Activated CD4-positive, alpha-beta T cell treated with anti-CD3 and anti-CD28 coated beads for 36 hours (primary cell): ENCODE measurements at regions of chr4 and their contacts with region 1.

Region 1: DNA sequence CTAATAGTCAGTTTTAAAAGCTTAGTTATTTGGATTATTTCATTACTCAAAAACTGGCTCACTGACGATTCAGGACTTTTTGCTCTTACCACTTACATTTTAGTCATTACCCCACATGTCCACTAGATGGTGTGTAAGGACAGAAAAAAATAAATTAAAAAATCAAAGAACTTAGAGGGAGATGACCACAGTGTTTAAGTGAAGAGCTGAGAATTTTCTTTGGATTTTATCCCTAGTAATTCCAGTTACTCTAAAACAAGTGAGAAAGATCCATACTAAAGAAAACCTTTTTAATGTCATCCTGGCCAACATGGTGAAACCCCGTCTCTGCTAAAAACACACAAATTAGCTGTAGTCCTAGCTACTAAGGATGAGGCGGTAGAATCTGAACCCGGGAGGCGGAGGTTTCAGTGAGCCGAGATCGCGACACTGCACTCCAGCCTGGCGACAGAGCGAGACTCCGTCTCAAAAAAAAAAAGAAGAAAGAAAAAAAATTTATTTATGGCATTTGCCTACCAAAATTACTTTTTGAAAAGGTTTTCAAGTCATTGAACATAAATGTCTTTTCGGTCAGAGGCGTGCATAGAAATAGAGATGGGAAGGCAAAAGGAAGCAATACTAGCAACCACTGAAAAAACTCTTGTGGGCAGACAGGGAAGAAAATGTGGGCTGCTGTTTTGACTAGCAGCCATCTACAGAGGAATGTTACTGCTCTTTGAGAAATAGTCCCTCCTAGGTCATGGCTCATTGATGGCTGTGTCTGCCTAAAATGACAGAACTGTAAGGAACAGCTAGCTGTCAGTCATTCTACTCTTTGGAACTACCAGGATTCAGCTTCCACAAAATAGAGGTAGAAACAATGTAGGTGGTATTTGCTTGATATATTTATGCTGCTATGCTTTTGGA is 26.6 kb upstream of the TMPRSS11B start:
- DNase-seq: peak; percentile 22
- ATAC-seq: peak; percentile 69
- H3K4me3 Mint-ChIP-seq: no peak overlapping the region
- H3K27ac Mint-ChIP-seq: no peak overlapping the region
- H3K4me1 Mint-ChIP-seq: peaks cover 4% of the 10 kb centered on the region
- H3K27me3 Mint-ChIP-seq: peaks cover 8% of the 10 kb centered on the region

Region 2: GRCh38 chr4:68257719-68258118 is 14.4 kb before region 1 on chr4:
- CTCF ChIA-PET with region 1: interaction called, 16 read pairs
- POLR2A ChIA-PET with region 1: no interaction called
- intact Hi-C with region 1: no loop called
- DNase-seq: no peak
- ATAC-seq: no peak
- H3K4me3 Mint-ChIP-seq: no peak overlapping the region
- H3K27ac Mint-ChIP-seq: no peak overlapping the region
- H3K4me1 Mint-ChIP-seq: no peaks in the 10 kb centered on the region
- H3K27me3 Mint-ChIP-seq: peaks cover 18% of the 10 kb centered on the region

Region 3: GRCh38 chr4:68297137-68297536 is 25.0 kb after region 1 on chr4:
- CTCF ChIA-PET with region 1: no interaction called
- POLR2A ChIA-PET with region 1: no interaction called
- intact Hi-C with region 1: no loop called
- DNase-seq: no peak
- ATAC-seq: no peak
- H3K4me3 Mint-ChIP-seq: no peak overlapping the region
- H3K27ac Mint-ChIP-seq: no peak overlapping the region
- H3K4me1 Mint-ChIP-seq: peaks cover 6% of the 10 kb centered on the region
- H3K27me3 Mint-ChIP-seq: peaks cover 3% of the 10 kb centered on the region

Region 4: GRCh38 chr4:68700152-68700551 is 428.0 kb after region 1 on chr4:
- CTCF ChIA-PET with region 1: no interaction called
- POLR2A ChIA-PET with region 1: no interaction called
- intact Hi-C with region 1: no loop called
- DNase-seq: no peak
- ATAC-seq: no peak
- H3K4me3 Mint-ChIP-seq: no peak overlapping the region
- H3K27ac Mint-ChIP-seq: no peak overlapping the region
- H3K4me1 Mint-ChIP-seq: no peaks in the 10 kb centered on the region
- H3K27me3 Mint-ChIP-seq: no peaks in the 10 kb centered on the region

Region 5: GRCh38 chr4:69167300-69167699 is 895.2 kb after region 1 on chr4:
- CTCF ChIA-PET with region 1: interaction called, 3 read pairs
- POLR2A ChIA-PET with region 1: no interaction called
- intact Hi-C with region 1: loop called (anchors 1 to 5 kb)
- DNase-seq: no peak
- ATAC-seq: no peak
- H3K4me3 Mint-ChIP-seq: no peak overlapping the region
- H3K27ac Mint-ChIP-seq: no peak overlapping the region
- H3K4me1 Mint-ChIP-seq: no peaks in the 10 kb centered on the region
- H3K27me3 Mint-ChIP-seq: peaks cover 2% of the 10 kb centered on the region